PC-9 (cell line): ENCODE measurements at regions of chr6 and their contacts with region 1.

Region 1: DNA sequence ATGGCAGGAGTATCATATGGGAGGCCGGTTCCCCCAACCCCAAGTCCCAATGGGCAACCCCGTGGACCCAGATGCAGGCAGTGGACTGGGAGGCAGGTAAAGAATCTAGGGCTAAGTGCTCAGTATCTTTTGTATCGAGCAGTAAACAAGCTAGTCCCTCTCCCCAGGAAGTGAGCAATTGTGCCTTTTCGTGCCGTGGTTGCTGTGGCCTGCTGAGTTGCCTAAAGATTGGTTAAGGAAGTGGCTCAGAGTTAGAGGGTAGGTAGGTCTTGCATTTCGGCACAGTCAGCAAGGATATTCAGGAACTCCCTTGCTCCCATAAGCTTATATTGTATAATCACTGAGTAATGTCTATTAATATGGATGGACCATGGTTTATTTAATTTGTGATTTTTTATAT is 1.3 kb upstream of the DNAH8 start:
- DNase-seq: no peak
- H3K4me3 ChIP-seq: no peak overlapping the region
- H3K27ac ChIP-seq: no peak overlapping the region
- H3K4me1 ChIP-seq: peaks cover 10% of the 10 kb centered on the region; the same call in 1 of the 2 replicates
- H3K27me3 ChIP-seq: no peaks in the 10 kb centered on the region
- CTCF ChIP-seq: no peak

Region 2: GRCh38 chr6:38476141-38476540 is 237.7 kb before region 1 on chr6:
- CTCF ChIA-PET with region 1: no interaction called
- POLR2A ChIA-PET with region 1: no interaction called
- intact Hi-C with region 1: no loop called
- DNase-seq: no peak
- H3K4me3 ChIP-seq: no peak overlapping the region
- H3K27ac ChIP-seq: no peak overlapping the region
- H3K4me1 ChIP-seq: no peaks in the 10 kb centered on the region
- H3K27me3 ChIP-seq: no peaks in the 10 kb centered on the region
- CTCF ChIP-seq: no peak

Region 3: DNA sequence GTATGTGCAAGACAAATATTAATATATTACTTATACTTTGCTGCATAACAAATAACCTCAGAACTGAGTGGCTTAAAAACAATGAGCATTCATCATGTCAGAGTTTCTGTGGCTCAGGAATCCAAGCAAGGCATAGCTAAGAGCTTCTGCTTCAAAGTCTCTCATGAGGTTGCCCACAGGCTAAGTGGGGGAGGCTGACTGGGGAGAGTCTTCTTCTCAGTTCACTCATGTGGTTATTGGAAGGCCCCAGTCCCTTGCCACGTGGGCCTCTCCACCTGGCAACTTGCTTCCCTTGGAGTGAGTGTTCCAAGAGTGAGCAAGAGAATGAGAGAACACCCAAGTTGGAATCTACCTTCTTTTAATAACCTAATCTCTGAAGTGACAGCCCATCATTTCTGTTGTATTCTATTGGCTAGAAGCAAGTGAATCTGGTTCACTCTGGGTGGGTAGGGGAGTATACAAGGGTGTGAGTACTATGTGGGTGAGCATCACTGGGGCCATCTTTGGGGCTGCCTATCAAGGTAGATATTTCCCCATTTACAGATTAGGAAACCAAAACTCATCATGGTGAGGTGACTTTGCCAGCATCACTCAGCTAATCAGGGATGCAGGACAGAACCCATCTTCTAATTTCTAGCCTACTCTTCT is 37.3 kb after region 1 on chr6:
- CTCF ChIA-PET with region 1: no interaction called
- POLR2A ChIA-PET with region 1: interaction called, 15 read pairs
- intact Hi-C with region 1: no loop called
- DNase-seq: no peak
- H3K4me3 ChIP-seq: no peak overlapping the region
- H3K27ac ChIP-seq: no peak overlapping the region
- H3K4me1 ChIP-seq: peaks cover 31% of the 10 kb centered on the region
- H3K27me3 ChIP-seq: no peaks in the 10 kb centered on the region
- CTCF ChIP-seq: no peak

Region 4: GRCh38 chr6:38955861-38956260 is 242.0 kb after region 1 on chr6:
- CTCF ChIA-PET with region 1: no interaction called
- POLR2A ChIA-PET with region 1: no interaction called
- intact Hi-C with region 1: no loop called
- DNase-seq: no peak
- H3K4me3 ChIP-seq: no peak overlapping the region
- H3K27ac ChIP-seq: no peak overlapping the region
- H3K4me1 ChIP-seq: no peaks in the 10 kb centered on the region
- H3K27me3 ChIP-seq: peaks cover 36% of the 10 kb centered on the region
- CTCF ChIP-seq: no peak